Mammary epithelial cell (primary cell): ENCODE measurements at regions of chr14 and their contacts with region 1.

Region 1: DNA sequence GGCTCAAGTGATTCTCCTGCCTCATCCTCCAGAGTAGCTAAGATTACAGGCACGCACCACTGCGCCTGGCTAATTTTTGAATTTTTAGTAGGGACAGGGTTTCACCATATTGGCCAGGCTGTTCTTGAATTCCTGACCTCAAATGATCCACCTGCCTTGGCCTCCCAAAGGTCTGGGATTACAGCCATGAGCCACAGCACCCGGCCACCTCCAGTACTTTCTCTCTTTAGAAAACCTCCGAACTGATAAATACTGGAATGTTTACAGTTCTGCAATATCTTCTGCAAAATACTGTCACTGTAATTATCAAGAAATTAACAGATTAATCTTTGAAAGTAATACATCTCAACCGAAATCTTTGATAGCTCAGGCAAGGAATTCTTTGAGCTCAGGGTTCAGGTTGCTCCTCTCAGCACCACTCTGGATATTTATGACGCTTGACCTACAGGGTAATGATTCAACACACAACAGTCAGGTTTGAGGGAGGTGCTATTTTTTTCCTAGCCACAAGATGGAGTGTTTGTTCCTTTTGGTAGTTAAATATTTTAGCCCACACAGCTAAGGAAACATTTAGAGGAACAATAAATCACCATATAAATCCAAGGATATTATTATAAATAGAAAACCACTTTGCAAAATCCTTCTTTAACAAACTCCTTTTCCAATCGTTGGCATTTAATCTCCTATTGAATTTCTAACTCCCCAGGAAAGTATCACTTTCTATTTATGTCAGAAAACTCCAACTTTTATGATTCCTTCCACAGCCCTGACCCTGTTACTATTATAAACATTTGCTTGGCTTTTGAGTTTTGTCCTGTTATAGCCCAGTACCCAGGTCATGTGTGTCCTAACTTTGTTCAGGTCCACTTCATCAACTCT is 48.6 kb upstream of the GTF2A1 start:
- DNase-seq: peak; percentile 64
- H3K4me3 ChIP-seq: no peak overlapping the region
- H3K27ac ChIP-seq: no peak overlapping the region
- H3K4me1 ChIP-seq: peaks cover 22% of the 10 kb centered on the region
- H3K27me3 ChIP-seq: no peaks in the 10 kb centered on the region
- CTCF ChIP-seq: peak; percentile 71 to 87

Region 2: GRCh38 chr14:80954687-80955299 is 314.5 kb before region 1 on chr14:
- CTCF ChIA-PET with region 1: no interaction called
- dilution Hi-C with region 1: no loop called
- in situ Hi-C with region 1: no loop called
- intact Hi-C with region 1: loop called (anchors 5 kb)
- DNase-seq: peak; percentile 63
- H3K4me3 ChIP-seq: peak overlapping the region; percentile 36 to 58 (median 42)
- H3K27ac ChIP-seq: no peak overlapping the region
- H3K4me1 ChIP-seq: no peaks in the 10 kb centered on the region
- H3K27me3 ChIP-seq: peaks cover 2% of the 10 kb centered on the region
- CTCF ChIP-seq: peak; percentile 61 to 82

Region 3: GRCh38 chr14:81220830-81221578 is 48.3 kb before region 1 on chr14 and contains the start of gene GTF2A1:
- CTCF ChIA-PET with region 1: no interaction called
- dilution Hi-C with region 1: no loop called
- in situ Hi-C with region 1: no loop called
- intact Hi-C with region 1: loop called (anchors 5 kb)
- DNase-seq: peak; percentile 95
- H3K4me3 ChIP-seq: peak within 1 kb of the TSS; percentile 83 to 100 (median 92)
- H3K27ac ChIP-seq: peak within 1 kb of the TSS; percentile 97
- H3K4me1 ChIP-seq: peaks cover 10% of the 10 kb centered on the region
- H3K27me3 ChIP-seq: no peaks in the 10 kb centered on the region
- CTCF ChIP-seq: no peak
- total RNA-seq, gene GTF2A1: 26.3 to 30.9 TPM

Region 4: GRCh38 chr14:81324018-81324417 is 54.7 kb after region 1 on chr14:
- CTCF ChIA-PET with region 1: no interaction called
- dilution Hi-C with region 1: no loop called
- in situ Hi-C with region 1: no loop called
- intact Hi-C with region 1: loop called (anchors 1 kb)
- DNase-seq: peak; percentile 90
- H3K4me3 ChIP-seq: peak overlapping the region; percentile 70 to 88 (median 81)
- H3K27ac ChIP-seq: peak overlapping the region; percentile 93
- H3K4me1 ChIP-seq: peaks cover 60% of the 10 kb centered on the region
- H3K27me3 ChIP-seq: no peaks in the 10 kb centered on the region
- CTCF ChIP-seq: no peak

Region 5: DNA sequence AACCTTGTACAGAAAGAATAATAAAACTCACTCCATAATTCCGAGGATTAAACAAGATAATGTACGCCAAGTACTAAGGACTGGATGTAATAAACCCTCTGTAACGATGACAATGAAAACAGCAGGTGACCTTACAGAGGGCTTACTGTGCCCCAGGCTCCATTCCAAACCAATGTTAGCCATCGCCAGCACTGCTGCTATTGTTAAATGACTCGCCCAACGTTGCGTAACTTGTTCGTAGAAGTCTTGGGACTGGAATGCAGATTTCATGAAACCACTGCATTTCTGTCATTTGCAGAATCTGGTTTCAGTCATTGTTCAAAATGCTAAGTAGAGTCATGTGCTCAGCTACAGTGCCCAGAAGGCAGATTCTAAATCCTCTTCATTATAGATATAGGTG is 131.5 kb after region 1 on chr14:
- CTCF ChIA-PET with region 1: no interaction called
- dilution Hi-C with region 1: no loop called
- in situ Hi-C with region 1: no loop called
- intact Hi-C with region 1: loop called (anchors 2 kb)
- DNase-seq: peak; percentile 97
- H3K4me3 ChIP-seq: peak overlapping the region in 1 of 3 experiments; percentile 11
- H3K27ac ChIP-seq: peak overlapping the region; percentile 100
- H3K4me1 ChIP-seq: peaks cover 49% of the 10 kb centered on the region
- H3K27me3 ChIP-seq: no peaks in the 10 kb centered on the region
- CTCF ChIP-seq: no peak

Region 6: DNA sequence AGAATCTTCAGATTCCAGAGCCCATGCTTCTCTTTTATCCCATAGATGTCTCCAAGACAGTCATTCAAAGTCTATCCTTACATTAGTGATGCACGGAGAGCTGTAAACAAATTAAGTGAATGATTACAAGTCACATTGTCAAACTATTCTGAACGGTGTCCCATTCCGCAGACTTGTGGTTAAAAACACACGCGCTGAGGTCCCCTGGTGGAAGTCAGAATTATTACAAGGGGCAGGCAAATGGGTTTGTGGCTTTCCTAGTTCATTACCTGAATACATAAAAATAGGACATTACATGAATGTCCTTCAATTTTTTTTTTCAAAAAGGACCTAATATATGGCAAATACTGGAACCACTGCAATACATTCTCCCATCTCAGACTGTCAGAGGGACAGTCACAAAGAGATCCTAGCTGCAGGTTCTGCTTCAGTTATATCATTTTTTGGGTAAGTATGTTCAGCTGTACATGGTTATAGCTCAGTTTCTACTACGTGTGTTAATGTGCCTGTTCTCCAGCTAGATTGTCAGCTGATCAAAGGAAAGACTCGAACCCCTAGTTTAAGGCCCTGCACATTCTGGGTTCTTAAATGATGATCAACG is 183.9 kb after region 1 on chr14:
- CTCF ChIA-PET with region 1: interaction called, 3 read pairs
- dilution Hi-C with region 1: no loop called
- in situ Hi-C with region 1: loop called (anchors 5 kb)
- intact Hi-C with region 1: loop called (anchors 1 kb)
- DNase-seq: peak; percentile 48
- H3K4me3 ChIP-seq: no peak overlapping the region
- H3K27ac ChIP-seq: no peak overlapping the region
- H3K4me1 ChIP-seq: peaks cover 6% of the 10 kb centered on the region
- H3K27me3 ChIP-seq: no peaks in the 10 kb centered on the region
- CTCF ChIP-seq: peak; percentile 87 to 93